Adrenal gland (tissue), 19 donors: ENCODE measurements at regions of chr7 and their contacts with region 1.

Region 1: DNA sequence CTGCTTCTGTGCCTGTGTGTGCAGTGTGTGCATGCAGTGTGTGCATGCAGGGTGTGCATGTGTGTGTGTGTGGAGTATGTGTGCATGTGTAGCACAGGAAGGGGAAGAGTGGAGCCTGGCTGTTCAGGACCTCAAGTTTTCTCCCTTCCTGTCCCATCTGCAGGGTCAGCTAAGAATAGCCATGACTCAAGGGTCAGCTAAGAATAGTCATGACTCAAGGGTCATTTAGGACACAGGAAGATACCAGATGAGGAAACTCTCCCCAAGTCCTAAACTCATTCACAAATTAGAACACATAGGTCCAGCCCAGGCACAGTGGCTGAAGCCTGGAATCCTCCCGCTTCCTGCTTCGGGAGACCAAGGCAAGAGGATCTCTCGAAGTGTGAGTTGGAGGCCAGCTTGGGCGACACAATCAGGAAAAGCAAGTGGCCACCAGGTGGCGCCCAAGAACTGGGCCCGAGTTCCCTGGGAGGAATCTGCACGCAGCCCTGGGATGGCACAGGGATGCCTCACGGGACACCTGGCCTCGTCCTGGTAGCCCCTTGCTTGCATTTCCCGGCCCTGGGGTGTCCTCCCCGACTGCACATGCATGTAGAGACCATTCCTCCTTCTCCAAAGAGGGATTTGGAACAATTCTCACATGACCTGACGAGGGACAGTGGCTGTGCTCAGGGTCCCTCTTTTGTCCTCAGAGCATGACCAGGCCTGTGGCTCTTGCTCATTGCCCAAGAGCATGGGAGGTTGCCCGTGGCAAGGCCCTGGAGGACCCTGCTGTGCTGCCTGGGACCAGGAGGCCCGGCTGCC is 21.4 kb upstream of the VOPP1 start:
- DNase-seq: peak; percentile 35 to 78 (median 61)
- H3K4me3 ChIP-seq: no peak overlapping the region
- H3K27ac ChIP-seq: no peak overlapping the region
- H3K4me1 ChIP-seq: peaks cover 0 to 5% of the 10 kb centered on the region in 2 donors
- H3K27me3 ChIP-seq: no peaks in the 10 kb centered on the region
- CTCF ChIP-seq: peak; percentile 53 to 72 (median 62)
- POLR2A ChIP-seq: no peak

Region 2: DNA sequence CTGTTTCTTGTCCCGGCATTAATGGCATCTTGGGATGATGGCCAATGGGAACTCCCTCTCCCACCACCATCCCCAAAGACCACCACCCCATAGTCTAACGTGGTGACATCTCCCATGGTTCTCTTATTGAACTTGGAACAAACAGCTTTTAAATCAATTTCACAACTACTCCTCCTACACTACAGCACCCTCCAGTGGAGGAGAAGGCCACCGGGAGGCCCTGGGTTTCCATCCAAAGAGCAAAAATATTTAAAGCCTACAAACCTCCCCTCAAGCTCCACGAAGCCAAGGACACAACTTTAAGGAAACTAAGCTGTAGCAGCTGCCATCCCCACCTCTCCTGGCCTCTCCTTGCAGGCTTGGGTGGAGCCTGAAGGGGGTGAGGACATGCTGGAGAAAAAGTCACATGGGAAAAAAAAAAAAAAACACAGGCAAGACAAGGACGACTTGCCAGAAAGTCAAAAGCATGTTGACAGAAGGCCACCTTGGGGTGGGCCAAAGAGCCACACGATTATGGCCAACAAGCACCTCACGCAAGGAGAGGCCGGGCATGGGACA is 322.6 kb before region 1 on chr7:
- intact Hi-C with region 1: loop called (anchors 5 to 10 kb)
- DNase-seq: peak in 1 of 7 donors; percentile 30
- H3K4me3 ChIP-seq: no peak overlapping the region
- H3K27ac ChIP-seq: no peak overlapping the region
- H3K4me1 ChIP-seq: no peaks in the 10 kb centered on the region
- H3K27me3 ChIP-seq: no peaks in the 10 kb centered on the region
- CTCF ChIP-seq: no peak
- POLR2A ChIP-seq: no peak

Region 3: DNA sequence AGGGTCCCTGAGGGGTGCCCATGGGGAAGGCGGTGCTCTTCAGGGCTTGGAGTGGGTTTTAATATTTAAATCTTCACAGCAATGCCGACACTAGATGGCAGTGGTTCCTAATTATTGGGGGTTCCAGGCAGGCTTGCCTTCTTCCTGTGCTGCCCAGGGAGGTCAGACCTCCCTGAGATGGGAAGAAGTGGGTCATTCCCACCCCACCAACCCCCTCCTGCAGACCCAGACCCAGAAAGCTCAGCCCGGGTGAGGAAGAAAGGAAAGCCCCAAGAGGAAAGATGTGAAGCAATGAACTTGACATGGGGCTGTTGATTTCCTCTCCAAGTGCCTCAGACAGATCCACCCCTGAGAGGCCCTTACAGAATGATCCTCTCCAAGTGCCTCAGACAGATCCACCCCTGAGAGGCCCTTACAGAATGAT is 313.7 kb before region 1 on chr7:
- intact Hi-C with region 1: loop called (anchors 5 to 10 kb)
- DNase-seq: peak; percentile 56 to 80 (median 72)
- H3K4me3 ChIP-seq: no peak overlapping the region
- H3K27ac ChIP-seq: no peak overlapping the region
- H3K4me1 ChIP-seq: no peaks in the 10 kb centered on the region
- H3K27me3 ChIP-seq: no peaks in the 10 kb centered on the region
- CTCF ChIP-seq: peak; percentile 41 to 76 (median 68)
- POLR2A ChIP-seq: no peak

Region 4: DNA sequence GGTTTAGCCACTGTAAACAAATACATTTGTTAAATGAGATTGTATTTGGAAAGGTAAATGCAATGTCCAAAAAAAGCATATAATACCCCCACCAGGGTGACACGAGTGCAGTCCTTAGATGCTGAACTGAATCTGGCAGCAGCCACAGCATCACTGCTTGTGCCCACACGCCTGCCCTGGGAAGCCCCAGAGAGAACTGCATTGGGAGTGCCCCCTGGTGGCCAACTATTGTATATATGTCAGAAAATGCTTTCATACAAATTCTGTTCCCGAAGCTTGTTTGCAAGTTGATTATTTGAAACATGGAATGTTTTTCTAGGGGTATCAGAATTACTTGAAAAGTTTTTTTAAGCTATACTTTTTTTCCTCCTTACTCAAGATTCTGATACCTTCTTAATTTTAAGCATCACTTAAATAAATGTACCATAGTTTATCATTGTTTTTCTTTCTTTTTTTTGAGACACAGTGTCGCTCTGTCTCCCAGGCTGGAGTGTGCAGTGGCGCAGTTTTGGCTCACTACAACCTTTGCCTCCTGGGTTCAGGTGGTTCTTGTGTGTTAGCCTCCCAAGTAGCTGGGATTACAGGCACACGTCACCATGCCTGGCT is 178.4 kb before region 1 on chr7:
- intact Hi-C with region 1: no loop called
- DNase-seq: peak; percentile 72 to 92 (median 85)
- H3K4me3 ChIP-seq: no peak overlapping the region
- H3K27ac ChIP-seq: no peak overlapping the region
- H3K4me1 ChIP-seq: no peaks in the 10 kb centered on the region
- H3K27me3 ChIP-seq: no peaks in the 10 kb centered on the region
- CTCF ChIP-seq: peak; percentile 69 to 92 (median 82)
- POLR2A ChIP-seq: no peak

Region 5: GRCh38 chr7:55432939-55433784 is 160.6 kb before region 1 on chr7:
- intact Hi-C with region 1: loop called (anchors 5 to 10 kb)
- DNase-seq: peak in 1 of 7 donors; percentile 14
- H3K4me3 ChIP-seq: no peak overlapping the region
- H3K27ac ChIP-seq: no peak overlapping the region
- H3K4me1 ChIP-seq: no peaks in the 10 kb centered on the region
- H3K27me3 ChIP-seq: no peaks in the 10 kb centered on the region
- CTCF ChIP-seq: peak; percentile 9 to 55 (median 34)
- POLR2A ChIP-seq: no peak

Region 6: DNA sequence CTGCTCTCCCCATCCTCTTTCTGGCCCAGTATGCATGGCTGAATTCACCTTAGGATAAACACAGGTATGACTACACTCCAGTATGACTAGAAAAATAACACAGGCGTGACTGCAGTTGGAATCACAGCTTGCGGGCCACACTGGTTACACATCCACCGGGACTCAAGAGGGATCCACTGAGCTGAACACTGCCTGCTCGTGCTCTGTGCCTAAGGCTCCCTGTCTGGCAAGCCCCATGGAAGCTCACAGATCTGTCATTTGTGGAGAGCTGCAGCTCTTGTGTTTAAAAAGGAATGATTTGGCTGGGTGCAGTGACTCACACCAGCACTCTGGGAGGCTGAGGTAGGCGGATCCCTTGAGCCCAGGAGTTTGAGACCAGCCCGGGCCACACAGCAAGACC is 48.2 kb before region 1 on chr7:
- intact Hi-C with region 1: no loop called
- DNase-seq: peak in 5 of 7 donors; percentile 27 to 77 (median 44)
- H3K4me3 ChIP-seq: no peak overlapping the region
- H3K27ac ChIP-seq: no peak overlapping the region
- H3K4me1 ChIP-seq: peaks cover 15 to 28% of the 10 kb centered on the region in 2 donors
- H3K27me3 ChIP-seq: no peaks in the 10 kb centered on the region
- CTCF ChIP-seq: no peak
- POLR2A ChIP-seq: no peak

Region 7: DNA sequence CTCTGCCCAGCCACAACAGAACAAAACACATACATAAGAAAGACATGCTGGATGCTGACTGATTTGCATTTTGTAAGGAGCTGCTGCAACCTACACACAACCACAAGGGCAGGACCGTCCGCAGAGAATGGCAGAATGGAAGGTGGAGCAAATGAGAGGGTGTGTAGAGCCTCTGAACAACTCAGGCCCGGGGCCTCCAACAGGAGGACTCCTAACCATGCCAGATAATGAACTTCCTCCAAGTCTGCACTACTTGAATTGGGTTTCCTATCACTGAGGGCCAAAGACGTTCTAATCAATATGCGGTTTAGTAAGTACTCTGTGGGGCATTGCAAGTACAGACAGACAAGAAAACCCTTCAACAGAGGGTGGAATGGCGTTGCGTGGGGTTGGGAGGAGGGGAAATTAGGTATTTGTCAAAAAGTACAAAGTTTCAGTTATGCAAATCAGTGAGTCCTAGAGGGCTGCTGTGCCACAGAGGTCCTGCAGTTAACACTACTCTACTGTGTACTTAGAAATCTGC is 36.0 kb before region 1 on chr7:
- intact Hi-C with region 1: no loop called
- DNase-seq: no peak
- H3K4me3 ChIP-seq: no peak overlapping the region
- H3K27ac ChIP-seq: no peak overlapping the region
- H3K4me1 ChIP-seq: peaks cover 0 to 15% of the 10 kb centered on the region in 2 donors
- H3K27me3 ChIP-seq: no peaks in the 10 kb centered on the region
- CTCF ChIP-seq: no peak
- POLR2A ChIP-seq: no peak